Activated CD8-positive, alpha-beta T cell treated with anti-CD3 and anti-CD28 coated beads, Interleukin-2, amount 10 ng/mL, durations not matched to agents 7 days and 5 days (primary cell): ENCODE measurements at regions of chr6 and their contacts with region 1.

Region 1: GRCh38 chr6:26156076-26156849 is 69.0 kb downstream of the HFE start:
- DNase-seq: peak; percentile 91
- ATAC-seq: peak; percentile 55
- H3K4me3 Mint-ChIP-seq: peak overlapping the region; percentile 94
- H3K27ac Mint-ChIP-seq: peak overlapping the region; percentile 99
- H3K4me1 Mint-ChIP-seq: peaks cover 37% of the 10 kb centered on the region
- H3K27me3 Mint-ChIP-seq: peaks cover 8% of the 10 kb centered on the region

Region 2: GRCh38 chr6:26045065-26045927 is 111.0 kb before region 1 on chr6:
- CTCF ChIA-PET with region 1: no interaction called
- POLR2A ChIA-PET with region 1: interaction called, 211 read pairs
- DNase-seq: peak; percentile 91
- ATAC-seq: peak; percentile 55
- H3K4me3 Mint-ChIP-seq: peak overlapping the region; percentile 88
- H3K27ac Mint-ChIP-seq: peak overlapping the region; percentile 99
- H3K4me1 Mint-ChIP-seq: peaks cover 43% of the 10 kb centered on the region
- H3K27me3 Mint-ChIP-seq: no peaks in the 10 kb centered on the region

Region 3: GRCh38 chr6:26115226-26115625 is 41.0 kb before region 1 on chr6:
- CTCF ChIA-PET with region 1: no interaction called
- POLR2A ChIA-PET with region 1: interaction called, 213 read pairs
- DNase-seq: no peak
- ATAC-seq: peak; percentile 46
- H3K4me3 Mint-ChIP-seq: no peak overlapping the region
- H3K27ac Mint-ChIP-seq: peak overlapping the region; percentile 62
- H3K4me1 Mint-ChIP-seq: peaks cover 24% of the 10 kb centered on the region
- H3K27me3 Mint-ChIP-seq: no peaks in the 10 kb centered on the region

Region 4: GRCh38 chr6:26196846-26197648 is 40.8 kb after region 1 on chr6:
- CTCF ChIA-PET with region 1: interaction called, 17 read pairs
- POLR2A ChIA-PET with region 1: interaction called, 1,978 read pairs
- DNase-seq: peak; percentile 92
- ATAC-seq: peak; percentile 43
- H3K4me3 Mint-ChIP-seq: peak overlapping the region; percentile 99
- H3K27ac Mint-ChIP-seq: peak overlapping the region; percentile 93
- H3K4me1 Mint-ChIP-seq: peaks cover 50% of the 10 kb centered on the region
- H3K27me3 Mint-ChIP-seq: no peaks in the 10 kb centered on the region

Region 5: DNA sequence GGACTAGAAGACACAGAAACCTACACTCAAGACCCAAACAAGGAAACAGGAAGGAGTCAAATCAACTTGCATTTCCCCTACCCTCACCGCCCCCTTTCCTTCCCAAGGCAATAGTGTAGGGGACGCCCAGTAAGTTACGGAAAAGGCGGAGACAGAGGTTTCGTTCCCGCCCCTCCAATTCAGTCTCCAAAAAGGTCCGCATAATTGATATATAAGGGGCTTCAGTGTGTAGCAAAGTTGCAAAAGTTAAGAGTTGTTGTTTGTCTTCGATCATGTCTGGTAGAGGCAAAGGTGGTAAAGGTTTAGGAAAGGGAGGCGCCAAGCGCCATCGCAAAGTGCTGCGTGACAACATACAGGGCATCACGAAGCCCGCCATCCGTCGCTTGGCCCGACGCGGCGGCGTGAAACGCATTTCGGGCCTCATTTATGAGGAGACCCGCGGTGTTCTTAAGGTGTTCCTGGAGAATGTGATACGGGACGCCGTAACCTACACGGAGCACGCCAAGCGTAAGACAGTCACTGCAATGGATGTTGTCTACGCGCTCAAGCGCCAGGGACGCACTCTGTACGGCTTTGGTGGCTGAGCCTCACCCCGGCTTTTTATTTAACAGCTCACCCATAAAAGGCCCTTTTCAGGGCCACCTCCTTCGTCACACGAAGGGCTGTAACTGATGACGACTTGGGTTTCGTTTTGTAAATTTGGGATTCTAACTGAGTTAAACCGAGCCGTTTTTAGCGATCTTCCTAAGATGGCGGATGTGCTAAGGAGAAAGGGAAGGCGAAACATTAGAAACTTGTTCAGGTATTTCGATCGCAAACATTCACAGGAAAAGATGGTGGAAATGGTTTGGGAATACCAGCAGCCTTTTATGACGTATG is 84.1 kb after region 1 on chr6:
- CTCF ChIA-PET with region 1: no interaction called
- POLR2A ChIA-PET with region 1: interaction called, 294 read pairs
- DNase-seq: peak; percentile 94
- ATAC-seq: peak; percentile 81
- H3K4me3 Mint-ChIP-seq: peak overlapping the region; percentile 74
- H3K27ac Mint-ChIP-seq: peak overlapping the region; percentile 96
- H3K4me1 Mint-ChIP-seq: peaks cover 51% of the 10 kb centered on the region
- H3K27me3 Mint-ChIP-seq: peaks cover 2% of the 10 kb centered on the region

Region 6: GRCh38 chr6:26295691-26296555 is 139.7 kb after region 1 on chr6:
- CTCF ChIA-PET with region 1: no interaction called
- POLR2A ChIA-PET with region 1: no interaction called
- DNase-seq: no peak
- ATAC-seq: peak; percentile 73
- H3K4me3 Mint-ChIP-seq: peak overlapping the region; percentile 9
- H3K27ac Mint-ChIP-seq: peak overlapping the region; percentile 58
- H3K4me1 Mint-ChIP-seq: peaks cover 19% of the 10 kb centered on the region
- H3K27me3 Mint-ChIP-seq: peaks cover 5% of the 10 kb centered on the region

Region 7: DNA sequence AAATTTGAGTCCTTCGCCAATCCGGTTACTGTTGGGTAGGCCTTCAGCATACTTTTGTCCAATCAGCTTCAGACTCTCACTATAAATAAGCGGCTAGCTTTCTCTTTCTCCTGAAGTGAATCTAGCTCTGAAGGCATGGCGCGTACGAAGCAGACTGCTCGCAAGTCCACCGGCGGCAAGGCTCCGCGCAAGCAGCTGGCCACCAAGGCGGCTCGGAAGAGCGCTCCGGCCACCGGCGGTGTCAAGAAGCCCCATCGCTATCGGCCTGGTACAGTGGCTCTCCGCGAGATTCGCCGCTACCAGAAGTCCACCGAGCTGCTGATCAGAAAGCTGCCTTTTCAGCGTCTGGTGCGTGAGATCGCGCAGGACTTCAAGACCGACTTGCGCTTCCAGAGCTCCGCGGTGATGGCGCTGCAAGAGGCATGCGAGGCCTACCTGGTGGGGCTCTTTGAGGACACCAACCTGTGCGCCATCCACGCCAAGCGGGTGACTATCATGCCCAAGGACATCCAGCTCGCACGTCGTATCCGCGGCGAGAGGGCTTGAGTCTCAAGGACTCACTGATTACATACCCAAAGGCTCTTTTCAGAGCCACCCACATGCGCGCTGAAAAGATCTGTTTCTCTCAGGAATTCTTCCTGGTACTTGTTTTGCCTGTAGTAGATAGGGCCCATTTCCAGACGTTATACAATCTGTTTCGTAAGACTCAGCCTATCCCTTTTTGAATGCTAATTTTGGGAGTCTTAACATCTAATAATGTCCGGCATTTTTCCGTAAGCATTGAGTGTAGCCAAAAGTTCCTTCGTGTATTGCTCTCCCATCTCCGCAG is 1653.9 kb after region 1 on chr6:
- CTCF ChIA-PET with region 1: no interaction called
- POLR2A ChIA-PET with region 1: interaction called, 47 read pairs
- DNase-seq: peak; percentile 89
- ATAC-seq: peak; percentile 32
- H3K4me3 Mint-ChIP-seq: peak overlapping the region; percentile 95
- H3K27ac Mint-ChIP-seq: peak overlapping the region; percentile 98
- H3K4me1 Mint-ChIP-seq: peaks cover 66% of the 10 kb centered on the region
- H3K27me3 Mint-ChIP-seq: peaks cover 2% of the 10 kb centered on the region